Breast epithelium (tissue), 4 donors: ENCODE measurements at regions of chr21 and their contacts with region 1.

Region 1: DNA sequence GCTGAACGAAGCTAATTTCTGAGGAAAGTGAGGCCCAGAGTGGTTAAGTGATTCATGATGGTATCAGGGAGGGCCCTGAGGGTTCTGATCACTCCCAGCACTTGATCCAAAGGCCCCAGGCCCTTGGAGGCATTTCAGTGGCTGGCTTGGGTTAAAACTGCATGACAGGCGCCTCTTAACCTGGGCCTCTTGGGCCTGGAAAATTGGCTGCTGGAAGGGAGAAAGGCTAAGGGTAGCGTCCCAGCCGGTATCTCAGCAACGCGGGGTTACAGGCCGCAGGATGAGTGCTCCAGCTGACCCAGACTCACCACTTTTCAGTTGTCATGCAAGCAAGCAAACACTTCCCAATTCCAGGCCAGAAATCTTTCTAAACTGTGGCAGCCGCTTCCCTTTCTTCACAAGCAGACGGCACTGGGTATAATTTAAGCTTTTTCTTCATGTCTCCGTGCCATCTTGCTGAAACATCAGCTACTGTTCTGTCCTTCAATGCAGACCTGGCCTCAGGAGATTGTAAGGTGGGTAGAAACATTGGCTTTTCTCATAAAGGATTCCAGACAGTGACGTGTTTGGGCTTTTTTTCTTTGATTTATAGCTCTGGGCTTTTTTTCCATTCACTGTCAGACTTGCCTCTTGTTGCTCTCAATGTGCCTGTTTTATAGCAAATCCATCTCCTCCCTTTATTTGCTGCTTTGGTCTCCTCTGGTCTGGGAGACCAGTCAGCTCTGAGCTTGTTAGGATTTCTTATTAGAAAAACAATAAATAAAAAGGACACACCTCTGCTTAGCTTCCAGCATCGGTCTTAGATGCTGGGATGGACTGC is 229.1 kb downstream of the KCNJ6 start:
- DNase-seq: no peak
- H3K4me3 ChIP-seq: no peak overlapping the region
- H3K27ac ChIP-seq: no peak overlapping the region
- H3K4me1 ChIP-seq: no peaks in the 10 kb centered on the region
- H3K27me3 ChIP-seq: no peaks in the 10 kb centered on the region
- CTCF ChIP-seq: no peak
- POLR2A ChIP-seq: no peak

Region 2: GRCh38 chr21:36567216-36567885 is 1119.8 kb before region 1 on chr21:
- intact Hi-C with region 1: loop called (anchors 10 kb)
- DNase-seq: no peak
- H3K4me3 ChIP-seq: no peak overlapping the region
- H3K27ac ChIP-seq: no peak overlapping the region
- H3K4me1 ChIP-seq: no peaks in the 10 kb centered on the region
- H3K27me3 ChIP-seq: peaks cover 0 to 19% of the 10 kb centered on the region in 2 donors
- CTCF ChIP-seq: no peak
- POLR2A ChIP-seq: no peak

Region 3: DNA sequence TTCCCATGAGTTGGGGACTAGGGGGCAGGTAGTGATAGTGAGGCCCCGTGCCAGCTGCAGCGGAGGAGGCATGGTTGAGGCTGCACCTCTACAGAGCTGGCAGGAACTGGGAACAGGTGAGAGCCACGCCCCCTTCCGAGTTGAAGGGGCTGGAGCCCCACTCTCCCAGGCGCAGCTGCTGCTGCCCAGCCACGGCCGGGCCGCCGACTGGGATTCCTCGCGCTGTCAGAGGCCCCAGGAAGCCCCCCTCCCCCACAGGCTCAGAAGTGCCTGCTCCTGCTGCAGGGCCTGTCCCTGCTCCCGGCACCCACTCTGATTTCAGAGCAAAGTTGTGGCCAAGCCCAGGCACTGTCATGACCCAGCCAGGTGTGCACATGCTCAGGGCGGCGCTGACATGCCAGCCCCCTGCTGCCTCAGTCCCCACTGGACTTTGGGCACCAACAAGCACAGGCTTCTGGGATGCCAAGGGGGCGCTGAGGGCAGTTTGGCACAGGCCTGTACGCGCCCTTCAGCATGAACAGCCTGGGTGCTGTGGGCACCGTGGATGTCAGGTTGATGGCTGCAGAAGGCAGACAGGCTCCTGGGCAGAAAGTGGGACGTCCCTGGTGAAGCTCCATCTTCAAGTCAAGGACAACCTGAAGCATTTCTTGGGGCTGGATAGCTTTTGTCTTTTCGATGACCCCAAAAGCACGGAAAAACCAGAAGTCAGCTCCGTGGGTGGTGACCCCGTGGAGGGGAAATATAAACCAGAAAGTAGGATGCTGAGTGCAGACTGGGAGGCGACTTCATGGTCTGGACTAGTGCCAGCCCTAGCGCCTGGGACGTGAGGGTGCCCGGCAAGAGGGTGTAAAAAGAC is 866.8 kb before region 1 on chr21:
- intact Hi-C with region 1: no loop called
- DNase-seq: no peak
- H3K4me3 ChIP-seq: no peak overlapping the region
- H3K27ac ChIP-seq: no peak overlapping the region
- H3K4me1 ChIP-seq: no peaks in the 10 kb centered on the region
- H3K27me3 ChIP-seq: no peaks in the 10 kb centered on the region
- CTCF ChIP-seq: no peak
- POLR2A ChIP-seq: no peak

Region 4: GRCh38 chr21:37862536-37862935 is 175.3 kb after region 1 on chr21:
- intact Hi-C with region 1: no loop called
- DNase-seq: no peak
- H3K4me3 ChIP-seq: no peak overlapping the region
- H3K27ac ChIP-seq: no peak overlapping the region
- H3K4me1 ChIP-seq: no peaks in the 10 kb centered on the region
- H3K27me3 ChIP-seq: no peaks in the 10 kb centered on the region
- CTCF ChIP-seq: no peak
- POLR2A ChIP-seq: no peak